ENCODE measurements at regions of chr12 and their contacts with region 1.

Region 1: DNA sequence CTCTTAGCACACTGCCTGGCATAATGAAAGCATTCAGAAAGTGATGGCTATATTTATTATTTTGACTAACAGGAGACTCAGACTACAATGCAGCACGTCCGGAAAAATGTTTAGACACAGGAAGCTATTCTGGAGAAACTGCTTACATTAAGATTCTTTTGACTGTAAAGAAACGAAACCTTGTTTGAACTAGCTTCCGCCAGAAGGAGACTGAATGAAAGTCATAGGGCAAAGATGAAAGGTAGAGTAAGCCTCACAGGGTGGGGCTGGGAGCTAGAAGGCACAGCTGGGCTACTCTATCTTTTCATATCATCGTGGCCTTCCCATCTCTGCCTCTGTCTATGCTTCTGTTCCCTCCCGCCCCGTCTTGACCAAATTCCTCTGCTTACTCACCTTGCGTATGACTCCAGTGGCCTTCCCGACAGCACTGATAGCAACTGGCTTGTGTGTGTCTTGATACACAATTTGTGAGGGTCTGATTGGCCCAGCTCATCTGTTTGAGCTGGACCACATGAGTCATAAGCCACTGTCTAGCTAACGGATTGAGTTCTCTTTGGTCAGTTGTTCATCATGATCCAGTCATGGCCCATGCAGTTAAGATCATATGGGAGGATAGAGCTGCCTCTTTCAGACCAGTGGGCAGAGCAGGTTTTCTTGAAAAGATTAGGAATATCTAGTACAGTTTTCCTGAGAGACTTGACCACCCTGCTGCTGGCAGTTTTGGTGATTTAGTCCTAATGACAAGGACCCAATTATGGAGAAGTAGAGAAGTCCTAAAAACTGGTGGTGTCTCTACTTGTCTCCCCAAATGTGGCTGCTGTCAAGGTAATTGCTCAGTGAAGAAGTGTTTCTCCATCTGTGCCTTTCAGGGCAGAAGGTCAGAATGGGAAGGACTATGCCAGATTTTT is 151.5 kb upstream of the SLC38A2 start:
- DNase-seq: peak; percentile 54
- ATAC-seq: peak; percentile 96
- H3K4me3 Mint-ChIP-seq: peak overlapping the region; percentile 77
- H3K27ac Mint-ChIP-seq: peak overlapping the region; percentile 96
- H3K4me1 Mint-ChIP-seq: peaks cover 40% of the 10 kb centered on the region
- H3K27me3 Mint-ChIP-seq: no peaks in the 10 kb centered on the region

Region 2: DNA sequence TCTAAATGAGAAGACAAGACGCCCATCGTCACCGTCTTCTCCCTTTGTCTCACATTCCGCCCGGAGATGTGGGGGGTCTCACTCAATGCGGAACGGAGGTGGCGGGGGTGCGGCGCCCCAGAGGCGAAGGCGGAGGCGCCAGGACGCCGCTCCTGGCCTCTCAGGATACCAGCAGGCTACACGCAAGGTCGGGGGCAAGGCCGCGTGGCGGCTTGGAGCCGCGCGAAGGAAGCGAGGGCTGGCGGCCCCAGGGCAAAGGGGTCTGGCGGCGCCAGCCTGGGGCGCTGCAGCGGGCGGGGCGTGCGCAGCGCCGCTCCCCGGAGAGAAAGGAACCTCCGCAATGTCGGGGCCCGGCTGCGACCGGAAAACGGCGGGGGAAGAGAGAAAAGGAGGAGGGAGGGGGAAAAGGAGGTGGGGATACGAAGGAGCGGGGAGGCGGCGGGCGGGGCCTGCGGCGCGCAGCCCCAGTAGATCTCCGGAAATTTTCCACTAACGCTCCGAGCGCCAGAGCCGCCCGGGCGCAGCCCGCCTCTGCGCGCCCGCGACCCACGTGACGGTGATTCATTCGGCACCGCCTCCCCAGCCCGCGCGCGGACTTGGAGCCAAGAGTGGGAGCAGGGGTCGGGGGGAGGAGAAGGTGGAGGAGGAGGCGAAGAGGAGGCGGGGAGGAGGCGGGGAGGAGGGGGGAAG is 141.0 kb before region 1 on chr12:
- POLR2A ChIA-PET with region 1: interaction called, 13 read pairs
- DNase-seq: peak; percentile 95
- ATAC-seq: peak; percentile 87
- H3K4me3 Mint-ChIP-seq: peak overlapping the region; percentile 93
- H3K27ac Mint-ChIP-seq: peak overlapping the region; percentile 92
- H3K4me1 Mint-ChIP-seq: peaks cover 40% of the 10 kb centered on the region
- H3K27me3 Mint-ChIP-seq: peaks cover 3% of the 10 kb centered on the region

Region 3: DNA sequence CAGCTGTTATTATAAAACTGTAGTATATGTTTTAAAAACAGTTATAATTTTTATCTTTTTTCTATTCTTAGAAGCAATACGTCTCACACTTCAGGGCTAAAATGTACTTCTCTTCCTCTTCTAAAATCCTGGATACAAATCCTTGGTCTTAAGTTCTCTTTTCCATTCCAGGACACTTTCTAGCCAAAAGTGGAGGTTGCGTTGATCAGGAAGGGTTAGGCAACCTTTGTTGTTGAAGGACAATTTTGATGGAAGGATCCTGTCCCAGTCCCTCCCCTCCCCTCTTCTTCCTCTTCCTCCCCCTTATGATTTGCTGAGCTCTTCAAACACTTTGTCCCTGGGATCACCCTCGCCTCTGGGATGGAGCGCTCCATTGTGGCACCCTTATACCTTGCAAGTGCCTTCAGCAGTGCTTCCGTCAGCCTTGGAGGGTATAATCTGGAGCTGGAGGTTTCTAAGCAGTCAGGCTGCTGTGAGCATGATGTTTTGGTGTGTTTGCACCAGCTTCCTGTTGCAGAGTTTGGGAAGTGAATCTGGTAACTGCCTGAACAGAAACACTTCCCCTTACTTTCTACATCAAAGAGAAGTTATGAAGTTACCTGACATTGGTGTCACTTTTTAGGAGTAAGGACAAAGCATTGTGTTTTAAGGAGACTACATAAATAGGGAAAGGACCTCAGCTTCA is 64.1 kb before region 1 on chr12:
- POLR2A ChIA-PET with region 1: interaction called, 13 read pairs
- DNase-seq: peak; percentile 38
- ATAC-seq: peak; percentile 41
- H3K4me3 Mint-ChIP-seq: peak overlapping the region; percentile 87
- H3K27ac Mint-ChIP-seq: peak overlapping the region; percentile 95
- H3K4me1 Mint-ChIP-seq: peaks cover 52% of the 10 kb centered on the region
- H3K27me3 Mint-ChIP-seq: no peaks in the 10 kb centered on the region

Region 4: DNA sequence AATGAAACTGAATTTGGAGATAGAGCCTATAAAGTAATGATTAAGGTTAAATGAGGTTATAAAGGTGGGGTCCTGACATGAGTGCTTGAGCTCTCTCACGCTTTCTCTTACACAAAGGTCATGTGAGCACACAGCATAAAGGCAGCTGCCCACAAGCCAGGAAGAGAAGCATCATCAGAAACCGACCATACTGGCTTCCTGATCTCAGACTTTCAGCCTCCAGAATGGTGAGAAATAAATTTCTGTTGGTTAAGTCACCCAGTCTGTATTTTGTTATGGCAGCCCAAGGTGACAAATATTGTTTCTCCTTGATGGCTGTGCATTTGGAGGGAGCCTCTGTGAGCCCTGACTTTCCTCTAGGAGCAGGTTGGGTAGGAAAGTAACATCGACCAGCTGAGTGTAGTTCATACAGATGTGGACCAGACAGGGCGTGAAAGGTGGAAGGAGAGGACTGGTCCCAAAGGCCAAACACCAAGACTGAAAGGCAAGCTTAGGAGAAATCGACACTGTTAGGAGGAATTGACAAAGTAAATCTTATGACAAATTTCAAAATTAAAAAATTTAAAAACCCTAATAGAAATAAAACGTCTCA is 54.0 kb before region 1 on chr12:
- POLR2A ChIA-PET with region 1: interaction called, 16 read pairs
- DNase-seq: peak; percentile 34
- ATAC-seq: peak; percentile 99
- H3K4me3 Mint-ChIP-seq: peak overlapping the region; percentile 84
- H3K27ac Mint-ChIP-seq: peak overlapping the region; percentile 94
- H3K4me1 Mint-ChIP-seq: peaks cover 32% of the 10 kb centered on the region
- H3K27me3 Mint-ChIP-seq: no peaks in the 10 kb centered on the region

Region 5: DNA sequence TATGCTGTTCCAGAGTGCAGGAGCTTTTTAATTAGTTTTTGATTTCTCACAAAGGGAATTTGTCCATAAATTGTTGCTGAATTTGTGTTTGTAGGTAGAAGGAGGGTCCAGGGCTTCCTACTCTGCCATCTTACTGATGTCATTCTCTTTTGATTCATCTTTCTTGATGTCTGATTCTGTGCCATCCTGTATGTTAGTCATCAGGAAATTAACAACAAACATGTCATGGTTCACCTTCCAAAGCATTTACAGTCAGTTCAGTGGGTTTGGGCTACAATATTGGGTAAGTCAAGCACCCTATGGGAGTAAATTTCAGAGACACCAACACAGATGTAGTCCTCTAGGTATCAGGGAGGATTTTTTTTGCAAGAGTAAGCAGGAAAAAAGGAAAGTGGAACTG is 16.4 kb before region 1 on chr12:
- POLR2A ChIA-PET with region 1: no interaction called
- DNase-seq: no peak
- ATAC-seq: no peak
- H3K4me3 Mint-ChIP-seq: no peak overlapping the region
- H3K27ac Mint-ChIP-seq: peak overlapping the region; percentile 19
- H3K4me1 Mint-ChIP-seq: peaks cover 10% of the 10 kb centered on the region
- H3K27me3 Mint-ChIP-seq: no peaks in the 10 kb centered on the region

Region 6: GRCh38 chr12:46577063-46577776 is 53.1 kb after region 1 on chr12:
- POLR2A ChIA-PET with region 1: no interaction called
- DNase-seq: no peak
- ATAC-seq: no peak
- H3K4me3 Mint-ChIP-seq: no peak overlapping the region
- H3K27ac Mint-ChIP-seq: no peak overlapping the region
- H3K4me1 Mint-ChIP-seq: peaks cover 3% of the 10 kb centered on the region
- H3K27me3 Mint-ChIP-seq: no peaks in the 10 kb centered on the region

Region 7: GRCh38 chr12:46608431-46609272 is 84.5 kb after region 1 on chr12:
- POLR2A ChIA-PET with region 1: interaction called, 10 read pairs
- DNase-seq: no peak
- ATAC-seq: peak; percentile 11
- H3K4me3 Mint-ChIP-seq: peak overlapping the region; percentile 74
- H3K27ac Mint-ChIP-seq: peak overlapping the region; percentile 87
- H3K4me1 Mint-ChIP-seq: peaks cover 25% of the 10 kb centered on the region
- H3K27me3 Mint-ChIP-seq: no peaks in the 10 kb centered on the region